IMR-90 (cell line): ENCODE measurements at regions of chr6 and their contacts with region 1.

Region 1: DNA sequence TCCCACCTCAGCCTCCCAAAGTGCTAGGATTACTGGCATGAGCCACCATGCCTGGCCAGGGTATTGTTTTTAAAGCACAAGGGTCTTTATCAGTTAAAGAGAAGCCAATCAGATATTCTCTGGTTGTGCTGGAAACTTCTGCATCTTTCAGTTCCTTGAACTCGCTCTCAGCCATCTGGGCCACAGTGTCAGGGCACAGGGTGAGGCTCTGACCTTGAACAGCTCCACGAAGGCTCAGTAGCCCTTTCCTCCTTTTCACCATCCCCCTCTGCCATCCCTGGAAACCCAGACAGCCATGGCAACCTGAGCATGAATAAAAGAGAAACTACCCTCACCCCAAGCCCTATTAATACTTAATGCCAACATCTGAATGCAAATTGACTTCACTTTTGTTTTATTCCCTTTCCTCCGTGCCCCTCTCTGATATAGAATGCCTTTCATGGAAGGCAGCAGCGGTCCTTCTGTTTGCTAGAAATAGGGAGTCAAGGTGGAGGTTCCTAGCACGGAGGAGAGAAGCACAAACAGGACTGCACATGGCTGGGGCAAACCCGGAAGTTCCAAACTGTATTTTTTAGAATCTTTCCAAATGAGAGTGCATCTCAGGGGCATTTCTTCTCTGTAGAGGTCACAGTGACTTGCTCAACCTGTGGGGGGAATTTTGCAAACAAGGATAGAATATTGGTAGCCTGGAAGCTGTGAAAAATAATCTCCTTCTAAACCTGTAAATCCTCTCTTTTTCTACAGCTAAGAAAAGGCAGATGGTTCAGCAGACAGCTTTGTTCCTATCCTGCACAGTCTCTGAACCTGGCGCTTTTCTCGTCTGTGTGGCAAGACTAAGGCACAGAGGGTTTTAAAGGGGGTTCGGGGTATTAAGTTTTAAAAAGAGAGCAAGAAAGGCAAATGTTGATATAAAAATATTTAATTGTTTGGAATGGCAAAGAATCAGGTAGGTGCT is 176.4 kb upstream of the RREB1 start:
- DNase-seq: no peak
- ATAC-seq: no peak
- H3K4me3 ChIP-seq: no peak overlapping the region
- H3K27ac ChIP-seq: no peak overlapping the region
- H3K4me1 ChIP-seq: no peaks in the 10 kb centered on the region
- H3K27me3 ChIP-seq: no peaks in the 10 kb centered on the region; the same call in 1 of the 2 replicates
- CTCF ChIP-seq: no peak
- POLR2A ChIP-seq: no peak
- RAD21 ChIP-seq: no peak

Region 2: DNA sequence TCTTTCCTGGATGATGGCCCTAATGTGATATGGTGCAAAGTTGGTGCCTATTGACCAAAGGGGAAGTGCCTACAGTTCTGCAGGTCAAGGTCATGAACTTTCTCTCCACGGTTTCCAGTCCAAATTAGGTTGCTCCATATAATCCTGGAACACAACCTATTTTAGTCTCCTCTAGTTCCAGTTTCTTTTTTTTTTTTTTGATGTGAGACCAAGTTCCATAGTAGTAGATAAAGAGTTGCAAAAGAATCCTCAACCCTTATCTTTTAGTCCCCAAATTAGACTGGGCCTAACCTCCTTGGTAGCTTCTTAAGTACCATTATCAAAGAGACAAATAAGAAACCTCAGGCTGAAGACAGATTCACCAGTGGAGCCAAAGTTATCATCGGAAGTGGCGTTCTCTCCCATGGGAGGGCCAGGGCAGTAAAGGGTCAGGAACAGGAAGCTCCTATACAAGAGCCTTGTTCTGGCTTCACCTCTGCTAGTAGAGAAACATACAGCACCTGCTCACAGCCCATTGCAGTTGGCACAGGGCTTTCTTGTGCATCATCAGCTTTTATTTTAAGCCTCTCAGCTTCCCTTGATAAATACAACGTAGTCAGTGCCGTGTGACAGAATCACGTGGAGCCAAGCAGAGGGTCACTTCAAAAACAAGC is 44.2 kb after region 1 on chr6:
- CTCF ChIA-PET with region 1: no interaction called
- POLR2A ChIA-PET with region 1: no interaction called
- dilution Hi-C with region 1: no loop called
- in situ Hi-C with region 1: no loop called
- intact Hi-C with region 1: loop called (anchors 5 kb)
- DNase-seq: no peak
- ATAC-seq: no peak
- H3K4me3 ChIP-seq: no peak overlapping the region
- H3K27ac ChIP-seq: no peak overlapping the region
- H3K4me1 ChIP-seq: no peaks in the 10 kb centered on the region
- H3K27me3 ChIP-seq: peaks cover 10% of the 10 kb centered on the region
- CTCF ChIP-seq: no peak
- POLR2A ChIP-seq: no peak
- RAD21 ChIP-seq: no peak